AG04450 (cell line): ENCODE measurements at regions of chr1 and their contacts with region 1.

Region 1: GRCh38 chr1:153626922-153627796 is at the start of gene S100A13:
- DNase-seq: peak; percentile 92
- H3K4me3 ChIP-seq: peak within 1 kb of the TSS; percentile 80
- H3K27ac ChIP-seq: peak within 1 kb of the TSS; percentile 92
- H3K27me3 ChIP-seq: no peaks in the 10 kb centered on the region
- CTCF ChIP-seq: peak; percentile 78
- polyA plus RNA-seq, gene S100A13: 310 and 323 TPM in 2 replicates

Region 2: GRCh38 chr1:153566440-153567379 is 60.4 kb before region 1 on chr1:
- CTCF ChIA-PET with region 1: interaction called, 74 read pairs
- POLR2A ChIA-PET with region 1: interaction called, 12 read pairs
- DNase-seq: peak; percentile 98
- H3K4me3 ChIP-seq: no peak overlapping the region
- H3K27ac ChIP-seq: peak overlapping the region; percentile 100
- H3K27me3 ChIP-seq: no peaks in the 10 kb centered on the region
- CTCF ChIP-seq: no peak

Region 3: GRCh38 chr1:153639280-153639679 is 12.1 kb after region 1 on chr1:
- CTCF ChIA-PET with region 1: interaction called, 10 read pairs
- POLR2A ChIA-PET with region 1: interaction called, 8 read pairs
- DNase-seq: no peak
- H3K4me3 ChIP-seq: no peak overlapping the region
- H3K27ac ChIP-seq: no peak overlapping the region
- H3K27me3 ChIP-seq: no peaks in the 10 kb centered on the region
- CTCF ChIP-seq: no peak

Region 4: GRCh38 chr1:153652805-153653500 is 25.8 kb after region 1 on chr1:
- CTCF ChIA-PET with region 1: interaction called, 10 read pairs
- POLR2A ChIA-PET with region 1: interaction called, 8 read pairs
- DNase-seq: no peak
- H3K4me3 ChIP-seq: no peak overlapping the region
- H3K27ac ChIP-seq: no peak overlapping the region
- H3K27me3 ChIP-seq: no peaks in the 10 kb centered on the region
- CTCF ChIP-seq: no peak